ENCODE measurements at regions of chr6 and their contacts with region 1.

Region 1: GRCh38 chr6:53492860-53493634 is 51.9 kb downstream of the GCLC start:
- DNase-seq: no peak
- ATAC-seq: peak; percentile 47
- H3K4me3 Mint-ChIP-seq: no peak overlapping the region
- H3K27ac Mint-ChIP-seq: no peak overlapping the region
- H3K4me1 Mint-ChIP-seq: peaks cover 4% of the 10 kb centered on the region
- H3K27me3 Mint-ChIP-seq: peaks cover 14% of the 10 kb centered on the region

Region 2: GRCh38 chr6:53469163-53469562 is 23.9 kb before region 1 on chr6:
- CTCF ChIA-PET with region 1: no interaction called
- POLR2A ChIA-PET with region 1: no interaction called
- DNase-seq: no peak
- ATAC-seq: no peak
- H3K4me3 Mint-ChIP-seq: no peak overlapping the region
- H3K27ac Mint-ChIP-seq: no peak overlapping the region
- H3K4me1 Mint-ChIP-seq: no peaks in the 10 kb centered on the region
- H3K27me3 Mint-ChIP-seq: peaks cover 25% of the 10 kb centered on the region

Region 3: DNA sequence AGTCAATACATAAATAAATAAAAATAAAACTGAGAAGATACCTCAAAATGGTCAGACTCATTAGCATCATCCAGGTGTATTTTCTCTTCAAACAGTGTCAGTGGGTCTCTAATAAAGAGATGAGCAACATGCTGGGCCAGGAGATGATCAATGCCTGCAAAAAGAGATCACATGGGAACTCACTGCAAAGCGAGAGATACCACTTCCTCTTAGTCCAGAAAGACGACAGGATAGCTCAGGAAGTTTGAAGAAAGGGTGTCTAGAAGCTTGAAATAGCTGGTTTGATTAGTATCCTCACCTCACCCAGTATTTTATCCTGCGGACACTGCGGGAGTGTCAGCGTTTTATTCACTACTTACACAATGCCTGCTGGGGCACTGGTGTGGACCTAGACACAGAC is 13.8 kb after region 1 on chr6:
- CTCF ChIA-PET with region 1: interaction called, 27 read pairs
- POLR2A ChIA-PET with region 1: no interaction called
- DNase-seq: no peak
- ATAC-seq: no peak
- H3K4me3 Mint-ChIP-seq: no peak overlapping the region
- H3K27ac Mint-ChIP-seq: no peak overlapping the region
- H3K4me1 Mint-ChIP-seq: no peaks in the 10 kb centered on the region
- H3K27me3 Mint-ChIP-seq: no peaks in the 10 kb centered on the region

Region 4: DNA sequence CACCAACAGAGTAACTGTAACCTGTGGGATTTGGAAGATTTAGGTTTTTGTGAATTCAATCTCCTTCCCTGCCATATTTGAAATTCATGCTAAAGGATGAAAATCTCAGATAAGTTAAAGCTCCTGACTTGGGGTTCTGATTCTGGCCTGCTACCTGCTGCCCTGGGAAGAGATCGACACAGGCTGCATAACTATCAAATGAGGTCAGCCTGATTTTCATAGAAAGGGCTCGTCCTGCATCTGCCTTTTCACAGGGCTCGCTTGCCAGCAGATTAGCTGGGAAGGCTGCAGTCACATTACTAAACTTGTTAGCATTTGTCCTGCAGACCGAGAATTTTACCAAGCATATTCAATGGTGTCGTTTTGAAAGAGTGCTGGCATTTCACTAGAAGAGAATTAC is 37.3 kb after region 1 on chr6:
- CTCF ChIA-PET with region 1: interaction called, 10 read pairs
- POLR2A ChIA-PET with region 1: no interaction called
- DNase-seq: no peak
- ATAC-seq: no peak
- H3K4me3 Mint-ChIP-seq: no peak overlapping the region
- H3K27ac Mint-ChIP-seq: no peak overlapping the region
- H3K4me1 Mint-ChIP-seq: peaks cover 17% of the 10 kb centered on the region
- H3K27me3 Mint-ChIP-seq: no peaks in the 10 kb centered on the region

Region 5: DNA sequence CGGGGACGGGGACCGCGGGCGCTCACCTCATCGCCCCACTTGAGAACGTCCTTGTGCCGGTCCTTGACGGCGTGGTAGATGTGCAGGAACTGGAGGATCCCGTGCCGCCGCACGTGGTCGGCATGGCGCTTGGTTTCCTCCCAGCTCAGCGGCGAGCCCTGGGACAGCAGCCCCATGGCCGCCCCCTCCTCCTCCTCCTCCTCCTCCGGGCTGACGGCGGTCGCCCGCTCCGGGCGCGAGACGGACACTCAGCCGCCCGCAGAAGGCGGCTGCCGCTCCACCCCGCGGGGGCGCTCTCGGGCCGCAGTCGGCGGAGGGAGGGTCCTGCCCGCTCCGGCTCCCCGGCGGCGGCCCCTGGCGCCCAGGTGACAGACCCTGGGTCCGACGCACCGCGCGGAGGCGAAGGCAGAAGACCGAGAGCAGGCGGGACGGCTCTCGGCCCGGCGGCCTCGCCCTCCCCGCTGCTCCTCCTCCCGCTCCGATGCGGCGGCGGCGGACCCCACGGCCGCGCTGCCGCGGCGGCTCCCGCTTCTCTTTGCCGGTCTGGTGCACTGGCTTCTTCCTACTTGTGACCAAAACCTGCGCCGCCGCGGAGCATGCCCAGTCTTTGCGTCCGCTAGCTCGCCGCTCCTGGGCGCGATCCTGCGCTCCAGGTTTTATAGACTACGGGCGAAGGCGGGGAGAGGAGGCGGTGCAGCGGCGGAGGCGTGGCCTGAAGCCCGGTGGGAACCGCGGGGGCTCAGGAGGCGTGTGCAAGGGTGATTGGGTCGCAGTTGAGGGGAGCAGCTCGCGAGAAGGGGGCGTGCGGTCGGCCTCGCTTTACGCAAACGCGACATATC is 51.6 kb after region 1 on chr6 and contains the start of gene GCLC:
- CTCF ChIA-PET with region 1: interaction called, 19 read pairs
- POLR2A ChIA-PET with region 1: no interaction called
- DNase-seq: peak; percentile 93
- ATAC-seq: peak; percentile 68
- H3K4me3 Mint-ChIP-seq: peak within 1 kb of the TSS; percentile 89
- H3K27ac Mint-ChIP-seq: peak within 1 kb of the TSS; percentile 96
- H3K4me1 Mint-ChIP-seq: peaks cover 46% of the 10 kb centered on the region
- H3K27me3 Mint-ChIP-seq: peaks cover 17% of the 10 kb centered on the region
- total RNA-seq, gene GCLC: 22.1 to 26.5 TPM

Region 6: DNA sequence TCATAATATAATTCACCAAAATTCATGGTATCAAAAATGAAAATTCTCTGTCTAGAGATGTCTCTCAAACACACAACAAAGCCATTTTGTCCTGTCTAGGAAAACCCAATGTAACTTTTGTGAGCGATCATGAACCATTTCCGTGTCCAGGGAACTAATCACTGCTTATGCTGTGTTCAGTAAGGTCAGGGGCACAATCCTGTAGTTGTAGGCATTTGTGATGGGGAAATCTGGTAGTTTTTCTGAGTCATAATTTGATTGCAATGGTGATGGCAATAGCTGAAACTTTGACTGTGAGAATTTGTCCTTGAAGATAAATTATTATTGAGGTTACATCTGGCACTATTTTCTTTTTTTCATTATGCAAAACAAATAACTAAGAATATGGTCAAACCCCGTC is 72.8 kb after region 1 on chr6:
- CTCF ChIA-PET with region 1: no interaction called
- POLR2A ChIA-PET with region 1: no interaction called
- DNase-seq: no peak
- ATAC-seq: no peak
- H3K4me3 Mint-ChIP-seq: no peak overlapping the region
- H3K27ac Mint-ChIP-seq: no peak overlapping the region
- H3K4me1 Mint-ChIP-seq: no peaks in the 10 kb centered on the region
- H3K27me3 Mint-ChIP-seq: peaks cover 15% of the 10 kb centered on the region

Region 7: GRCh38 chr6:53651764-53652401 is 158.8 kb after region 1 on chr6:
- CTCF ChIA-PET with region 1: interaction called, 96 read pairs
- POLR2A ChIA-PET with region 1: no interaction called
- DNase-seq: peak; percentile 82
- ATAC-seq: peak; percentile 93
- H3K4me3 Mint-ChIP-seq: peak overlapping the region; percentile 89
- H3K27ac Mint-ChIP-seq: peak overlapping the region; percentile 87
- H3K4me1 Mint-ChIP-seq: peaks cover 38% of the 10 kb centered on the region
- H3K27me3 Mint-ChIP-seq: peaks cover 7% of the 10 kb centered on the region

Region 8: GRCh38 chr6:53658992-53659391 is 165.9 kb after region 1 on chr6:
- CTCF ChIA-PET with region 1: interaction called, 10 read pairs
- POLR2A ChIA-PET with region 1: no interaction called
- DNase-seq: no peak
- ATAC-seq: no peak
- H3K4me3 Mint-ChIP-seq: no peak overlapping the region
- H3K27ac Mint-ChIP-seq: no peak overlapping the region
- H3K4me1 Mint-ChIP-seq: no peaks in the 10 kb centered on the region
- H3K27me3 Mint-ChIP-seq: peaks cover 18% of the 10 kb centered on the region

Region 9: DNA sequence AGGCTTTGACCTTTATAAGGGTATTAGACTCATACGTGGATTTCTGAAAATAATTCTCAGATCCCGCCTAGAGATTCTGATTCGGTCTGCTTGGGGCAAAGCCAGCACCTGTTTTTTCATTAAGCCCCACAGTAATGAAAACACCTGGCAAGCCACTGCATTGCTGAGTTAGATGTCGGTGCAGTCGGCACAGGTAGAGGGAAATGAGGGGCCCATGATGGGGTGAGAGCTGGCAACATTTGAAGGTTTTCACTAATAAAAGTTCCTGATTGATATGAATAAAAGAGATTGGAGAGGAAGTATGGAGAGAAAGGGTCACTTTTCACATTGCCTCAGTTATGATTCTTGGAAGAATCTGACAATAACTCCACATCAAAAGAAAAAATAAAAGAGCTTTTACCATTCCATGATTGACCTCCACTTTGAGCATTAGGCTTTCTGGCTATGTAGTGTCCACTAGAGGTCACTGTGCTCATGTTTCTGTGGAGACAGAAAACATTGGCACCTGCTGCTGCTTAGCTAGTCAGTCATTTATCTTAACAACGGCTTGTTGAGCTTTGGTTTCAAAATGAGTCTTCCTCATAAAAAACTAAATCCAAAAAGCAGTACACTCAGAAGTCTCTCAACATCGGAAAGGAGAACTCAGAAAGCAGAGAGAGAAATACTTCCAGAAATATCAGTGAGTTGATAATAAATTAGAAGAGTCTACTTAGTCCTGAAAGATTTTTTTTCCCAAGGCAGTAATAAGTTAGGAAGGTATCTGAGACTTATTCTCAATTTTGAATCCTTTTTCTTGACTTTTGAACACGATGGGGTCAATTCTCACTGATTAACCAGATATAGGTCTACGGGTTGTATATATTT is 225.8 kb after region 1 on chr6:
- CTCF ChIA-PET with region 1: interaction called, 174 read pairs
- POLR2A ChIA-PET with region 1: no interaction called
- DNase-seq: peak; percentile 64
- ATAC-seq: peak; percentile 88
- H3K4me3 Mint-ChIP-seq: no peak overlapping the region
- H3K27ac Mint-ChIP-seq: no peak overlapping the region
- H3K4me1 Mint-ChIP-seq: peaks cover 9% of the 10 kb centered on the region
- H3K27me3 Mint-ChIP-seq: peaks cover 28% of the 10 kb centered on the region

Region 10: GRCh38 chr6:55117267-55117666 is 1624.2 kb after region 1 on chr6:
- CTCF ChIA-PET with region 1: no interaction called
- POLR2A ChIA-PET with region 1: no interaction called
- DNase-seq: no peak
- ATAC-seq: no peak
- H3K4me3 Mint-ChIP-seq: no peak overlapping the region
- H3K27ac Mint-ChIP-seq: no peak overlapping the region
- H3K4me1 Mint-ChIP-seq: no peaks in the 10 kb centered on the region
- H3K27me3 Mint-ChIP-seq: no peaks in the 10 kb centered on the region

Measured in activated CD8-positive, alpha-beta T cell treated with anti-CD3 and anti-CD28 coated beads, Interleukin-2, amount 10 ng/mL, durations not matched to agents 7 days and 5 days (primary cell).